ENCODE measurements at regions of chr22 and their contacts with region 1.

Region 1: GRCh38 chr22:20957316-20958101 is 9.5 kb upstream of the AIFM3 start:
- DNase-seq: peak; percentile 58
- ATAC-seq: peak; percentile 74
- H3K4me3 Mint-ChIP-seq: peak overlapping the region; percentile 74
- H3K27ac Mint-ChIP-seq: no peak overlapping the region
- H3K4me1 Mint-ChIP-seq: peaks cover 12% of the 10 kb centered on the region
- H3K27me3 Mint-ChIP-seq: peaks cover 18% of the 10 kb centered on the region
- CTCF ChIP-seq: no peak

Region 2: DNA sequence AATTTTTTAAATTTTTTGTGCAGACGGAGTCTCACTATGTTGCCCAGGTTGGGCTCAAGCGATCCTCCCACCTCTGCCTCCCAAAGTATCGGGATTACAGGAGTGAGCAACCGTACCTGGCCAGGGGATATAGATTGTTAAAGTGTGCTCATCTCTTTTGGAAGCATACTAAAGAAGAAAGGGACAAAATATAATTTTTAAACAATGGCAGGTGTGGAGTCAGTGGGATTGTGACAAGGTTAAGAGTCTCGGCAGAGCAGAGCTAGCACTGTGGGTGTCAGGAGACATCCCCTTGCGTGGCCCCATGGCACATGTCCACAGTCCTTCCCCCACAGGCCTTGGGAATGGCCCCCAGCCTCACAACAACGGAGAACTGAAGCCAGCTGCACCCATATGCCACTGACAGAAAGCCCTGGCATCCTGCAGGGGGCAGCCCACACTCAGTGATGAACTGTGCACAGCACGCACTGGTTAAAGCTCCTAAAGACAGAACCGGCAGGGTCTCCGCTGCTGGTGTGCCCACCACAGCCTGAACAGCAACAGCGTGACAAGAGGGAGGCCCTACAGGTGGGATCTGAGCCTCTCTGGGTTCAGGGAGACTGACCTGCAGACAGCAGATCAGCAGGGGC is 153.7 kb before region 1 on chr22:
- CTCF ChIA-PET with region 1: interaction called, 14 read pairs
- POLR2A ChIA-PET with region 1: no interaction called
- DNase-seq: peak; percentile 71
- ATAC-seq: peak; percentile 89
- H3K4me3 Mint-ChIP-seq: no peak overlapping the region
- H3K27ac Mint-ChIP-seq: no peak overlapping the region; the same call in 1 of the 2 replicates
- H3K4me1 Mint-ChIP-seq: no peaks in the 10 kb centered on the region
- H3K27me3 Mint-ChIP-seq: no peaks in the 10 kb centered on the region
- CTCF ChIP-seq: peak; percentile 47; the same call in 1 of the 2 replicates

Region 3: DNA sequence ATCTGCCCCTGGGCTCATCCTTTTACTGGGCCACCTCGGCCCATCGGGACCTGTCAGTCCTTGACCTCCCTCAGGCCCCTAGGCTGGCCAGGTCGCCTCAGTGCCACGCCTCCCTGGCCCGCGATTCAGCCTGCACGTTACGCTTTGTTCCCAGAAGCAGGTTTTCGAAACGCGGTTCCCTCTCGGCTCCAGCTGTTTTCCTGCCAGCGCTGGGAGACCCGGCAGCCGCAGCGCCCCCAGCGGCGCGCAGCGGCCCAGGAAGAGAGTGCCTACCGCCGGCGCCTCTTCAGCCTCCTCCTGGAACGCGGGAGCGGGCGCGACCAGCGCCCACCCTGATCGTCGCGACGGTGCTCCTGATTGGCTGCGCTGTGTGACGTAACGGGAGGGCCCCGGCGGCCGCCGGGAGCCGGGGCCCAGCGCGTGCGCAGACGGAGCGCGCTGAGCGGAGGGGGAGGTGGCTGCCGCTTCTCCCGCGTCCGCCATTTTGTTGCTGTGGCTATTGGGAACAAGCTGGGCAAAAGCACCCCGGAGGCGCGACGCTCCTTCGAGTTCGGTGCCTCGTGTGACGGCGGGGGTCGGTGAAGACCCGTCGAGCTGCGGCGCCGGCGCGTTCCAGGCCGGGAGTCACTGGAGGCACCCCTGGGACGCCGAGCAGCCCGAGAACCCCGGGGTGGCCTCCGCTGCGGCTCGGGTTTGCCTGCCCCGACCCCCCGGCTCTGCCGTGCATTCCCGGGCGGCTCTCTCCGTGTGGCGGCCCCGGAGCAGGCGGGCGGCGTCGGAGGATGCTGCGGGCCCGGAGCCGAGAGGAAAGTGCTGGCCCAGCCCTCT is 40.3 kb before region 1 on chr22 and contains the start of gene CRKL:
- CTCF ChIA-PET with region 1: interaction called, 33 read pairs
- POLR2A ChIA-PET with region 1: interaction called, 8 read pairs
- DNase-seq: peak; percentile 97
- ATAC-seq: peak; percentile 98
- H3K4me3 Mint-ChIP-seq: peak within 1 kb of the TSS; percentile 95
- H3K27ac Mint-ChIP-seq: peak within 1 kb of the TSS; percentile 99
- H3K4me1 Mint-ChIP-seq: peaks cover 28% of the 10 kb centered on the region
- H3K27me3 Mint-ChIP-seq: no peaks in the 10 kb centered on the region; the same call in 1 of the 2 replicates
- CTCF ChIP-seq: peak; percentile 79
- total RNA-seq, gene CRKL: 113 to 115 TPM (median 114 TPM) in 3 replicates

Region 4: GRCh38 chr22:20968281-20968977 is 10.9 kb after region 1 on chr22:
- CTCF ChIA-PET with region 1: interaction called, 25 read pairs
- POLR2A ChIA-PET with region 1: interaction called, 3 read pairs
- DNase-seq: no peak
- ATAC-seq: peak; percentile 7; the same call in 1 of the 2 replicates
- H3K4me3 Mint-ChIP-seq: no peak overlapping the region
- H3K27ac Mint-ChIP-seq: no peak overlapping the region
- H3K4me1 Mint-ChIP-seq: peaks cover 16% of the 10 kb centered on the region
- H3K27me3 Mint-ChIP-seq: peaks cover 65% of the 10 kb centered on the region
- CTCF ChIP-seq: no peak

Region 5: GRCh38 chr22:20981787-20982562 is 24.5 kb after region 1 on chr22 and contains the start of gene LZTR1:
- CTCF ChIA-PET with region 1: interaction called, 35 read pairs
- POLR2A ChIA-PET with region 1: interaction called, 11 read pairs
- DNase-seq: peak; percentile 81
- ATAC-seq: peak; percentile 69
- H3K4me3 Mint-ChIP-seq: peak within 1 kb of the TSS; percentile 96
- H3K27ac Mint-ChIP-seq: peak within 1 kb of the TSS; percentile 85
- H3K4me1 Mint-ChIP-seq: peaks cover 30% of the 10 kb centered on the region
- H3K27me3 Mint-ChIP-seq: peaks cover 32% of the 10 kb centered on the region
- CTCF ChIP-seq: no peak
- total RNA-seq, gene LZTR1: 38.3 to 44.5 TPM (median 40.1 TPM) in 3 replicates